PC-9 (cell line): ENCODE measurements at regions of chr11 and their contacts with region 1.

Region 1: GRCh38 chr11:118380571-118380970 is 20.8 kb upstream of the ATP5MG start:
- DNase-seq: no peak
- H3K4me3 ChIP-seq: no peak overlapping the region
- H3K27ac ChIP-seq: no peak overlapping the region
- H3K4me1 ChIP-seq: no peaks in the 10 kb centered on the region
- H3K27me3 ChIP-seq: no peaks in the 10 kb centered on the region
- CTCF ChIP-seq: no peak

Region 2: DNA sequence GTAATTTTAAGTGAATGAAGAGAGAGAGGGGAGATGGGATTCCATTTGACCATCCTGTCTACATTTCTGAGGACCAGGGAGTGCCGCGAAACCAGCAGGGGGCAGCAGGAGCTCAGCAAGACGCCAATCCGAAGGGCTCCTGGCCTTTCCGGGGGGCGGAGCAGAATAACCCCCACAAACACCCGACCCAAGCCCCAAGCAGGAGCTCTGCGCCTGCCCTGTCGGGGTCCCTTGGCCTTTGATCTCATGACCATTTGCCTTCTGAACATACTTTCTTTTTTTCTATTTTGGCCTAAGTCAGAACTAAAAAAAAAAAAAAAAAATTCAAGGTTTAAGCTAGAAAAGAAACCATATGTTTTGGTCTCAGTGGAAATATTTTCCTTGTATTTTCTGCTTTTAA is 182.2 kb before region 1 on chr11:
- CTCF ChIA-PET with region 1: interaction called, 18 read pairs
- POLR2A ChIA-PET with region 1: no interaction called
- intact Hi-C with region 1: no loop called
- DNase-seq: peak in 1 of 2 experiments; percentile 74
- H3K4me3 ChIP-seq: peak overlapping the region; percentile 44; the same call in 1 of the 2 replicates
- H3K27ac ChIP-seq: no peak overlapping the region
- H3K4me1 ChIP-seq: peaks cover 16% of the 10 kb centered on the region
- H3K27me3 ChIP-seq: no peaks in the 10 kb centered on the region
- CTCF ChIP-seq: peak; percentile 98

Region 3: GRCh38 chr11:118321386-118322121 is 59.0 kb before region 1 on chr11:
- CTCF ChIA-PET with region 1: no interaction called
- POLR2A ChIA-PET with region 1: no interaction called
- intact Hi-C with region 1: no loop called
- DNase-seq: peak; percentile 59 to 100
- H3K4me3 ChIP-seq: peak overlapping the region; percentile 27; the same call in 1 of the 2 replicates
- H3K27ac ChIP-seq: peak overlapping the region; percentile 78
- H3K4me1 ChIP-seq: peaks cover 66% of the 10 kb centered on the region
- H3K27me3 ChIP-seq: no peaks in the 10 kb centered on the region
- CTCF ChIP-seq: no peak

Region 4: GRCh38 chr11:118572061-118572980 is 191.8 kb after region 1 on chr11 and contains the start of gene ARCN1:
- CTCF ChIA-PET with region 1: interaction called, 11 read pairs
- POLR2A ChIA-PET with region 1: no interaction called
- intact Hi-C with region 1: no loop called
- DNase-seq: peak; percentile 56 to 61
- H3K4me3 ChIP-seq: peak within 1 kb of the TSS; percentile 98
- H3K27ac ChIP-seq: peak within 1 kb of the TSS; percentile 83
- H3K4me1 ChIP-seq: peaks cover 28% of the 10 kb centered on the region
- H3K27me3 ChIP-seq: no peaks in the 10 kb centered on the region
- CTCF ChIP-seq: no peak
- total RNA-seq, gene ARCN1: 79.8 and 105 TPM in 2 replicates

Region 5: GRCh38 chr11:118610804-118611795 is 230.5 kb after region 1 on chr11:
- CTCF ChIA-PET with region 1: no interaction called
- POLR2A ChIA-PET with region 1: no interaction called
- intact Hi-C with region 1: no loop called
- DNase-seq: peak in 1 of 2 experiments; percentile 67
- H3K4me3 ChIP-seq: no peak overlapping the region
- H3K27ac ChIP-seq: no peak overlapping the region
- H3K4me1 ChIP-seq: peaks cover 22% of the 10 kb centered on the region
- H3K27me3 ChIP-seq: peaks cover 13% of the 10 kb centered on the region; the same call in 1 of the 2 replicates
- CTCF ChIP-seq: peak; percentile 78